Activated naive CD4-positive, alpha-beta T cell treated with anti-CD3 and anti-CD28 coated beads for 36 hours (primary cell): ENCODE measurements at regions of chr16 and their contacts with region 1.

Region 1: GRCh38 chr16:4846891-4847773 is at the starts of genes GLYR1 and UBN1:
- DNase-seq: peak; percentile 100
- H3K4me3 Mint-ChIP-seq: peak within 1 kb of the TSS; percentile 83
- H3K27ac Mint-ChIP-seq: peak within 1 kb of the TSS; percentile 80
- H3K4me1 Mint-ChIP-seq: peaks cover 54% of the 10 kb centered on the region
- H3K27me3 Mint-ChIP-seq: no peaks in the 10 kb centered on the region
- total RNA-seq, gene GLYR1: 62.2 to 65.0 TPM
- total RNA-seq, gene UBN1: 26.7 to 28.1 TPM

Region 2: DNA sequence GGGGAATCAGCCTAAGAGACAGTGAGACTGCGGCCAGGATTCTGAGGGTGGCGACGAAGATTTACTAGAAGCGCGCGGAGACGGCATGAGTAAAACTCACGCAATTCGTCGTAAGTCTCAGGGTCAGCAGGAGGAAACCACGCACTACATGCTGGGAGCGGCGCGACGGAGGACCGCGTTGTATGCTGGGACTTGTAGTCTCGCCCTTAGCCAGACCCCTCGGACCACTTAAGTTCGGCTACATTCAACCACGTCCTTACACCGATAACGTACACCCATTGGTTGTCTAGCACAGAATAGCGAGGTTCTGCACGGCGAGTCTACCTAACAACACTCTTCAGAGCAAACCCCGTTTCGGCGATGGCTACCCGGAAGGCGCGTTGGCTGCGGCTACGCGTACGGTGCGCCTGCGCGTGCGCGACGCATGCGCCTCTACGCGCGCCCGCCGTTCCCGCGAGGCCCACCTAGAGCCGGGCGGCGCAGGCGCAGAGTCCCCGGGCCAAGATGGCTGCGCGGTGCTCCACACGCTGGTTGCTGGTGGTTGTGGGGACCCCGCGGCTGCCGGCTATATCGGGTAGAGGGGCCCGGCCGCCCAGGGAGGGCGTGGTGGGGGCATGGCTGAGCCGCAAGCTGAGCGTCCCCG is 421.6 kb before region 1 on chr16 and contains the start of gene DNAJA3:
- CTCF ChIA-PET with region 1: no interaction called
- intact Hi-C with region 1: loop called (anchors 5 kb)
- DNase-seq: peak; percentile 93
- H3K4me3 Mint-ChIP-seq: peak within 1 kb of the TSS; percentile 99
- H3K27ac Mint-ChIP-seq: peak within 1 kb of the TSS; percentile 100
- H3K4me1 Mint-ChIP-seq: peaks cover 39% of the 10 kb centered on the region
- H3K27me3 Mint-ChIP-seq: no peaks in the 10 kb centered on the region
- total RNA-seq, gene DNAJA3: 86.7 to 88.0 TPM

Region 3: DNA sequence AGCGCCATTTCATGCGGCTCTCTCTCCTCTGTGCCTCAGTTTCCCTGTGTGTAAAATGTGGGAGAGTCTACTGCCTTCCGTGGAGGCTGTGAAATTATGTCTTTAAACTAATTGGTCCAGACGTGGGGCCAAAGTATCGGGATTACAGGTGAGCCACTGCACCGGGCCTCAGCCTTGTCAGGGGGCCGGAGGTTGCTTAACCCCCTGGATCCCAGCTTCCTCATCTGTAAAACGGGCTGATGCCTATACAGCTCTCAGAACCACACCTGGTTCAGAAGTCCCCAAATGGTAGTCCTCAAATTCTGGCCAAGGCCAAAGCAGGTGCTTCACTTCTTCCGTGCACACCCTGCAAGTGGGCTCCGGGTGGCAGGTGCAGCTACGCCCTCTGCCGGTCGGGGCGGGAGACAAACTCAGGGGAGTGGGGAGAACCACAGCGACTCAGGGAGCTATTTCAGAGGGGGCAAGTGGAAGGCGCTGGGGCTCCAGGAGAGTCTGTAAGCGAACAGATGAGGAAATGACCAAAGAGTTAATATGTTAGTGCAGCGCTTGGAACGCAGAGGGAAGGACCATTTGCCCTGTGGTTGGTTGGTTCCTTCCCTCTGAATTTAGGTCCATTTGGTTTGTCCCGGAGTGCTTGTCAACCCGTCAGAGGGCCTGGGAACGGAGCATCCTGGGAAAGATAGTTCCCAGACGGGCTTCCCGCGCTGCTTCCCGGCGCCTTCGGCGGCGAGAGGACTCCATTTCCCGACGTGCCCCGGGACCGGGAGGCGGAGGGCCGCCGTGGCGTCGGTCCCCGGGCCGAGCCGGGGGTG is 222.9 kb before region 1 on chr16 and contains the start of gene MGRN1:
- CTCF ChIA-PET with region 1: no interaction called
- intact Hi-C with region 1: loop called (anchors 2 kb)
- DNase-seq: peak; percentile 96
- H3K4me3 Mint-ChIP-seq: peak within 1 kb of the TSS; percentile 97
- H3K27ac Mint-ChIP-seq: peak within 1 kb of the TSS; percentile 99
- H3K4me1 Mint-ChIP-seq: peaks cover 30% of the 10 kb centered on the region
- H3K27me3 Mint-ChIP-seq: no peaks in the 10 kb centered on the region
- total RNA-seq, gene MGRN1: 46.3 to 48.8 TPM

Region 4: DNA sequence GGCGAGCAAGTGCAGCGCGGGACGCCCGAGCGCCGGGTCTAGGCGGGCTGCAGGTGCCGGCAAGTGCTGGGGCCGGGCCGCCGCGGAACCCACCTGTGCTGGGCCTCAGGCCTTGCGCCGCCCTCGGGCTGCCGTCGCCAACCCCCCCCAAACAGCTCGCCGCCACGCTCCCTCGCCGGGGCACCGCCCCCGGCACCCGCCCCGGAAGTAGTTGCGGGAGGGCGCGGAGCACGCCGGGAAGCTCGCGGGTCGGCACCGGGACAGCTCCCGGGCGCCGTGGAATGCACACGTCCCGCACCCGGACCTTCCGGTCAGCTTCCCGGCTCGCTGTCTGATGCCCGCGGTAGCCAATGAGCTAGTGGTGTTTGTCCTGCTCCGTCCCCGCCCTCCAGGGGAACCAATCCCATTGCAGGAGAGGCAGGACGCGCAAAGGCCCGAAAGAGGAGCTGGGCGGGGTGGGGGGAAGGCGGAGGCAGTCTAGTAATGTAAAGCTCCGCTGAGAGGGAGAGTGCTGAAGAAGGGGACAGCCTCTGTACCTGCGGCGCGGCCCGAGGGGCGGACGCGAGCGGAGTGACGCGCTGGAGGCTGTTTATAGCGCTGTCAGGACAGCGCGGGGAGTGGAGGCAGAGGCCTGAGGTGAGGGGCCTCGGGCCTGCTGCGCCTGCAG is 112.9 kb before region 1 on chr16 and contains the starts of genes ANKS3 and DNAAF8:
- CTCF ChIA-PET with region 1: no interaction called
- intact Hi-C with region 1: loop called (anchors 1 kb)
- DNase-seq: peak; percentile 75
- H3K4me3 Mint-ChIP-seq: peak within 1 kb of the TSS; percentile 87
- H3K27ac Mint-ChIP-seq: peak within 1 kb of the TSS; percentile 46
- H3K4me1 Mint-ChIP-seq: peaks cover 16% of the 10 kb centered on the region
- H3K27me3 Mint-ChIP-seq: no peaks in the 10 kb centered on the region
- total RNA-seq, gene ANKS3: 8.2 to 11.7 TPM
- total RNA-seq, gene DNAAF8: 0.07 TPM in 1 of 2 experiments, not detected in the other

Region 5: DNA sequence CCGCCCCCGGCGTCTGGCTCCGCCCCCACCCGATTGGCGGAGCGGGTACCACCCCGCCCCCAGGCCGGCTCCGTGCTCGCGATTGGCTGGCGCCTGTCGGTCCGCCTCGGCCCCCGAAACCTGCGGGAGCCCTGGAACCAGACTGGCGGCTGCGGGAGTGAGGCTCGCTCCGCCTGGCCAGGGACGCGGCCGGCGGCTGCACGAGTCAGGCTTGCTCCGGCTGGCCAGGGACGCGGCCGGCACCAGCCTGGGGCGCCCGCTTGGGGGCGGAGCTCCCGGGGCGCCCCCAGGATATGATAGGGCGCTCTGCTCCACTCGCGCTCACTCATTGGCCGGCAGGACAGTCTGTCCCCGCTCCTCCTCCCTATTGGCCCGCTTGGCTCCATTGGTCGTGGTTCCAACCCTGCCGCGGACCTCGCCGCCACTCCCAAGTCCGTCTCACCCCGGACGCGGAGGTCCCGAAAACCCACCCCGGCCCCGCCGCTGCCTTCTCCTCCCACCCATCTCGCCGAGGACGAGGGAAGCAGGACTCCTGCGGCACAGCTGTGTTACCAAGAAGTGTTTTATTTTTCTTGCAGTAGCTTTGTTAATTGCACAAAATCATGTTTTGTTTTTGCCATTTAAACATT is 44.4 kb before region 1 on chr16:
- CTCF ChIA-PET with region 1: no interaction called
- intact Hi-C with region 1: loop called (anchors 1 kb)
- DNase-seq: peak; percentile 87
- H3K4me3 Mint-ChIP-seq: peak overlapping the region; percentile 77
- H3K27ac Mint-ChIP-seq: no peak overlapping the region
- H3K4me1 Mint-ChIP-seq: peaks cover 9% of the 10 kb centered on the region
- H3K27me3 Mint-ChIP-seq: no peaks in the 10 kb centered on the region

Region 6: DNA sequence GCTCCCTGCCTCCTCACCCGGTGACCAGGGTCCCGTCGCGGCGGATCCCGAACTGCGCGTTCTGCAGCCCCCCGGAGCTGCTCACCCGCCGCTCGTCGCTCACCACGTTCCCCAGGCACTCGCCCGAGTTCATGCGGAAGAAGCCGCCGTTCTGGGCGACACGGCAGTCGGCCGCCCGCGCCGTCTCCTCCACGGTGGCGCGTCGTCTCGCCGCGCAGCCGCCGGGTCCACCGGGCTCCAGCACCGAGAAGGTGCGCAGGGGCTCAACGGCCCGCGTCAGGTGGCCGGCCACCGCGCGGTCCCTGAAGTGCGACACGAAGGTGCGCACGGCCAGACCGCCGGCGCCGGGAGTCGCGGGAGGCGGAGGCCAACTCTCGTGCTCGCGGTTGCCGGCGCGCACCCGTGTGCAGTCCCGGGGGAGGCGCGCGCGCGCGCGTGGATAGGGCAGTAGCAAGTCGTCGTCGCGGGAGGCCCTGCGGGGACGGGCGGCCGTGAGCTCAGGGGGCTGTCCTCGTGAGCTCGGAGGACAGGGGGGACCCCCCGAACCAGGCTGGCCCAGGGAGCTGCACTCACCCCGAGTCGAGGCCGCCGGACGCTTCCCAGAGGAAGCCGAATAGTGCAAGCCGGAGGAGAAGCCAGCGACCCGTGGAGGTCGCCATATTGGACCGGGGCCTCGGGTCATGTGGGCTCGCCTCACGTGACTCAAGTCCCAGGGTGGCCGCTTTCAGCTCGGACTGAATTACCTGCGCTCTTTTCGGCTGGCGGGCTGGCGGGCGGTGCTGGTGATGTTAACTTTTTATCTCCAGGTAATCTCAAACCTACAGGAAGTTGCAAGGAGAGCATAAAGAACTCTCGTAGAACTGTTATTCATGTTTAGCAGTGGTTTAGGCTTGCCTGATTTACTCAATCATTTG is 186.4 kb after region 1 on chr16 and contains the start of gene NAGPA:
- CTCF ChIA-PET with region 1: no interaction called
- intact Hi-C with region 1: loop called (anchors 5 kb)
- DNase-seq: peak; percentile 92
- H3K4me3 Mint-ChIP-seq: peak within 1 kb of the TSS; percentile 84
- H3K27ac Mint-ChIP-seq: peak within 1 kb of the TSS; percentile 61
- H3K4me1 Mint-ChIP-seq: peaks cover 16% of the 10 kb centered on the region
- H3K27me3 Mint-ChIP-seq: no peaks in the 10 kb centered on the region
- total RNA-seq, gene NAGPA: 5.8 to 7.9 TPM